Panc1 (cell line): ENCODE measurements at regions of chr3 and their contacts with region 1.

Region 1: GRCh38 chr3:124007186-124007585 is 15.3 kb upstream of the ROPN1 start:
- DNase-seq: no peak
- ATAC-seq: no peak
- H3K4me3 ChIP-seq: no peak overlapping the region
- H3K27ac ChIP-seq: no peak overlapping the region
- H3K4me1 ChIP-seq: no peaks in the 10 kb centered on the region
- H3K27me3 ChIP-seq: peaks cover 12% of the 10 kb centered on the region
- CTCF ChIP-seq: no peak

Region 2: DNA sequence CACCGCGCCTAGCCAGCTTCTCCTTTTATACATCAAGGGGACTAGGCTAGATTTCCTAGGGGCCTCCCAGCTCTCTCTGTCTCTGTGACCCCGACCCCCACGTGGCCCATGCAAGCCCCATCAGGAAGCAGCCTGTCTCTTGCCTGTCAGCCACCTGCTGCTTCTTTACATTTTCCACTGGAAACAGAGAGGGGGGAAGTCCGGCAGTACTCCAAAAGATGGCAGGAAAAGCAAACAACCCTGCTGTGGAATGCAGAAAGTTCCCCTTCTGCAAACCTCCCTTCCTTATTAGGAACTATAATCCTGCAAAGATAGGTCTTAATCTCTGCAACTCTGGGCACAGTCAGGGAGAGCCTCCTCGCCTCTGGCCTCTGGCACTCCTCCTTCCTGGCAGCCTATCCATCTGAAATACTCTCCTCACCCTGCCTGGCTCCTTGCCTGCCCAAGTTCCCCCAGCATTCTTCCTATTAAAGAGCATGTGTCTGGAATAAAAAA is 375.0 kb before region 1 on chr3:
- CTCF ChIA-PET with region 1: no interaction called
- POLR2A ChIA-PET with region 1: no interaction called
- in situ Hi-C with region 1: no loop called
- intact Hi-C with region 1: no loop called
- DNase-seq: no peak
- ATAC-seq: peak; percentile 72
- H3K4me3 ChIP-seq: no peak overlapping the region
- H3K27ac ChIP-seq: no peak overlapping the region
- H3K4me1 ChIP-seq: 0 out of 2 replicates have a peak, but pooled peaks cover 5% of the 10 kb centered on the region
- H3K27me3 ChIP-seq: no peaks in the 10 kb centered on the region
- CTCF ChIP-seq: no peak

Region 3: DNA sequence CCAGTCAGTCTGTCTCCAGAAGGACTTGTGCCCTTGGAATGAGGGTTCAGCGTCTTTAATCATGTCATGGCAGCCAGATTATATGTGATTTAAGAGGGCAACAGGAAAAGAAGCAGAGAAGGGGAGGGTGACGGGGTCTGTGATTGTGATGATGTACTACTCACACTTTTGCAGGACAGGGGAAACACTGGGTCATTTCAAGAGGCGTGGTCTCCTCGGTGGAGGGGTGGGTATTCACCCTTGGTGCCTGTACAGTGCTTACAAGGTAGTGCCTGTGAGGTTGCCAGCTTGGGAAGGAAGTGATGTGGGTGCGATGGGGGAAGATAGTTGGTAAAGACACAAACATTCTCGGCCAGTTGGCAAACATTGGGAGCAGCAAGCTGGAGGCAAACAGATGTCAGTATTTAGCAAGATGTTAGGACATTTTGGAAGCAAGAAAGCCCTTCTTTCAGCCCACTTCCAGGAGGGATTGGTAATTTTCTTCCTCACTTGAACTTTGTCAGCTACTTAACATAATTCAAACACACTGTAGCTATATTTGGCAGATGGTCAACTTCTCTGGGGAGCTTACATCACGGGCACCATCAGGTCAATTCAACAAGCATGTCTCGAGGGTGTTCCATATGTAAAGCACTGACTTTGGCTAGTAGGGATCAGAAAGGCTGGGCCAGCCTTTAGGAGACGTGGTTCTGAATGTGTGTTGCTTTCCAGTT is 56.2 kb after region 1 on chr3:
- CTCF ChIA-PET with region 1: interaction called, 13 read pairs
- POLR2A ChIA-PET with region 1: no interaction called
- in situ Hi-C with region 1: no loop called
- intact Hi-C with region 1: no loop called
- DNase-seq: no peak
- ATAC-seq: no peak
- H3K4me3 ChIP-seq: no peak overlapping the region
- H3K27ac ChIP-seq: no peak overlapping the region
- H3K4me1 ChIP-seq: no peaks in the 10 kb centered on the region
- H3K27me3 ChIP-seq: peaks cover 31% of the 10 kb centered on the region
- CTCF ChIP-seq: no peak

Region 4: GRCh38 chr3:124905849-124906248 is 898.7 kb after region 1 on chr3:
- CTCF ChIA-PET with region 1: no interaction called
- POLR2A ChIA-PET with region 1: no interaction called
- in situ Hi-C with region 1: no loop called
- intact Hi-C with region 1: no loop called
- DNase-seq: no peak
- ATAC-seq: no peak; the same call in 1 of the 2 replicates
- H3K4me3 ChIP-seq: no peak overlapping the region
- H3K27ac ChIP-seq: no peak overlapping the region
- H3K4me1 ChIP-seq: no peaks in the 10 kb centered on the region; the same call in 1 of the 2 replicates
- H3K27me3 ChIP-seq: no peaks in the 10 kb centered on the region
- CTCF ChIP-seq: peak; percentile 27; the same call in 1 of the 2 replicates